Heart right ventricle (tissue), 16 donors: ENCODE measurements at regions of chr10 and their contacts with region 1.

Region 1: GRCh38 chr10:75111367-75111906 is at the start of gene SAMD8:
- DNase-seq: peak; percentile 96 to 97
- ATAC-seq: peak; percentile 86 to 93 (median 89)
- H3K4me3 ChIP-seq: peak within 1 kb of the TSS; percentile 74 to 98 (median 81)
- H3K27ac ChIP-seq: peak within 1 kb of the TSS; percentile 85 to 99 (median 96)
- H3K4me1 ChIP-seq: peaks cover 0 to 66% (median 51%) of the 10 kb centered on the region in 9 donors
- H3K27me3 ChIP-seq: no peaks in the 10 kb centered on the region
- CTCF ChIP-seq: peak in 8 of 9 donors; percentile 47 to 61 (median 52)
- total RNA-seq, gene SAMD8: 23.8 to 31.2 (median 26.5) TPM

Region 2: GRCh38 chr10:74151056-74151878 is 960.2 kb before region 1 on chr10 and contains the start of gene ADK:
- intact Hi-C with region 1: loop called in 2 of 10 experiments (anchors 10 kb)
- DNase-seq: peak; percentile 99 to 100
- ATAC-seq: peak; percentile 96 to 99 (median 98)
- H3K4me3 ChIP-seq: peak within 1 kb of the TSS; percentile 56 to 99 (median 76)
- H3K27ac ChIP-seq: peak within 1 kb of the TSS; percentile 62 to 93 (median 90)
- H3K4me1 ChIP-seq: peaks cover 0 to 61% (median 40%) of the 10 kb centered on the region in 9 donors
- H3K27me3 ChIP-seq: no peaks in the 10 kb centered on the region
- CTCF ChIP-seq: peak in 4 of 9 donors; percentile 37 to 62 (median 42)
- total RNA-seq, gene ADK: 25.5 to 50.0 (median 40.1) TPM

Region 3: DNA sequence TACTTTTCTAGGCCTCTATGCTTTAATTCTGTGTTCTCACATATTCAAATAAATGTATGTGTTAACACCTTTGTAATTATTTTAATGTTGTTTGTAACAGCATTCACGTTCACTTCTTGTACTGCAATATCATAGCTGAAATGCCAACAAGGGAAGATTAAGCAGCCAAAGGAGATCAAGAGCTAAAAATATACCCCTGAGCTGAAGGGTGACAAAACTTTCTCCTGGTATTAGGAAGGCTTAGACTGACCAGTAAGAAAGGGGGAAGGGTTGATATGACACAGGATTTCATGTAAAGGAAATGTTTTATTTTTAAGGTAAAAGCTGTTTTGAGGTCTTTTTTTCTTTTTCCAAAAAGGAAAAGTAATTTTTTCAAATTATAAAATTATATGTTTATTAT is 58.8 kb after region 1 on chr10:
- intact Hi-C with region 1: loop called in 2 of 10 experiments (anchors 5 to 10 kb)
- DNase-seq: no peak
- ATAC-seq: peak; percentile 34 to 88 (median 78)
- H3K4me3 ChIP-seq: no peak overlapping the region
- H3K27ac ChIP-seq: peak overlapping the region in 9 of 10 donors; percentile 33 to 75 (median 64)
- H3K4me1 ChIP-seq: peaks cover 0 to 35% (median 14%) of the 10 kb centered on the region in 9 donors
- H3K27me3 ChIP-seq: no peaks in the 10 kb centered on the region
- CTCF ChIP-seq: no peak

Region 4: DNA sequence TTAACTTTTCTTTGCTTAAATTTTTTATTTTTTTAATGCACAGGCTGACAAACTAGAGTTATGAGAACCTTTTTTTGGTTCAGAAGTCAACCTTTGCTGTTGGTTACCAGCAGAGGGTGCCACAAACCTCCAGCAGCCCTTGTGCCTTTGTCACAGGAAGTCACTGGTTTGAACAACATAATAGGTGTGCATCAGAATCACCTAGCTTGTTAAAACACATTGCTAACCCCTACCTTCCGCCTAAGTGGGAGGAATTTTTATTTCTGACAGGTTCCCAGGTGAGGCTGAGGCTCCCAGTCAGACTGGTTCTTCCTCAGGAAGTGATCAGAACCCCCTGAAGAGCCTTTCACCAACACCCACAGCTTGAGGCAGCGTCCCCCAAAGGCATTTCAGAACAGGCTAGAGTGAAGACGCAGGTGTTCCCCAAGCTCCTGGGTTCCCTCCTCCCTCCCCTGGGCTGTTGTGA is 76.6 kb after region 1 on chr10:
- intact Hi-C with region 1: loop called in 3 of 10 experiments (anchors 10 kb)
- DNase-seq: peak in 1 of 2 donors; percentile 52
- ATAC-seq: peak in 7 of 8 donors; percentile 18 to 60 (median 35)
- H3K4me3 ChIP-seq: no peak overlapping the region
- H3K27ac ChIP-seq: peak overlapping the region in 4 of 10 donors; percentile 1 to 39 (median 20)
- H3K4me1 ChIP-seq: peaks cover 0 to 38% (median 20%) of the 10 kb centered on the region in 9 donors
- H3K27me3 ChIP-seq: no peaks in the 10 kb centered on the region
- CTCF ChIP-seq: peak; percentile 47 to 80 (median 70)

Region 5: GRCh38 chr10:75210282-75211006 is 99.0 kb after region 1 on chr10 and contains the start of gene VDAC2:
- intact Hi-C with region 1: loop called in 5 of 10 experiments (anchors 5 kb)
- DNase-seq: peak; percentile 92 to 94
- ATAC-seq: peak; percentile 97 to 99 (median 98)
- H3K4me3 ChIP-seq: peak within 1 kb of the TSS; percentile 72 to 98 (median 90)
- H3K27ac ChIP-seq: peak within 1 kb of the TSS; percentile 94 to 100 (median 99)
- H3K4me1 ChIP-seq: peaks cover 5 to 50% (median 47%) of the 10 kb centered on the region in 9 donors
- H3K27me3 ChIP-seq: no peaks in the 10 kb centered on the region
- CTCF ChIP-seq: no peak
- total RNA-seq, gene VDAC2: 445 to 606 (median 499) TPM